HEK293 (cell line): ENCODE measurements at regions of chr6 and their contacts with region 1.

Region 1: GRCh38 chr6:41801380-41801779 is 13.9 kb downstream of the TOMM6 start:
- H3K4me3 ChIP-seq: no peak overlapping the region
- H3K27ac ChIP-seq: no peak overlapping the region
- H3K4me1 ChIP-seq: no peaks in the 10 kb centered on the region
- CTCF ChIP-seq: no peak

Region 2: GRCh38 chr6:41066867-41067304 is 734.5 kb before region 1 on chr6:
- CTCF ChIA-PET with region 1: no interaction called
- POLR2A ChIA-PET with region 1: no interaction called
- H3K4me3 ChIP-seq: no peak overlapping the region
- H3K27ac ChIP-seq: no peak overlapping the region
- H3K4me1 ChIP-seq: no peaks in the 10 kb centered on the region
- CTCF ChIP-seq: peak; percentile 58

Region 3: GRCh38 chr6:41818271-41819054 is 17.1 kb after region 1 on chr6:
- CTCF ChIA-PET with region 1: interaction called, 16 read pairs
- POLR2A ChIA-PET with region 1: no interaction called
- H3K4me3 ChIP-seq: no peak overlapping the region
- H3K27ac ChIP-seq: no peak overlapping the region
- H3K4me1 ChIP-seq: peaks cover 2% of the 10 kb centered on the region; the same call in 1 of the 2 replicates
- CTCF ChIP-seq: no peak

Region 4: GRCh38 chr6:41941280-41942066 is 140.1 kb after region 1 on chr6 and contains the start of gene CCND3:
- CTCF ChIA-PET with region 1: interaction called, 10 read pairs
- POLR2A ChIA-PET with region 1: no interaction called
- H3K4me3 ChIP-seq: peak within 1 kb of the TSS; percentile 83
- H3K27ac ChIP-seq: peak within 1 kb of the TSS; percentile 51; the same call in 1 of the 2 replicates
- H3K4me1 ChIP-seq: peaks cover 20% of the 10 kb centered on the region
- CTCF ChIP-seq: no peak